ENCODE measurements at regions of chr7 and their contacts with region 1.

Region 1: DNA sequence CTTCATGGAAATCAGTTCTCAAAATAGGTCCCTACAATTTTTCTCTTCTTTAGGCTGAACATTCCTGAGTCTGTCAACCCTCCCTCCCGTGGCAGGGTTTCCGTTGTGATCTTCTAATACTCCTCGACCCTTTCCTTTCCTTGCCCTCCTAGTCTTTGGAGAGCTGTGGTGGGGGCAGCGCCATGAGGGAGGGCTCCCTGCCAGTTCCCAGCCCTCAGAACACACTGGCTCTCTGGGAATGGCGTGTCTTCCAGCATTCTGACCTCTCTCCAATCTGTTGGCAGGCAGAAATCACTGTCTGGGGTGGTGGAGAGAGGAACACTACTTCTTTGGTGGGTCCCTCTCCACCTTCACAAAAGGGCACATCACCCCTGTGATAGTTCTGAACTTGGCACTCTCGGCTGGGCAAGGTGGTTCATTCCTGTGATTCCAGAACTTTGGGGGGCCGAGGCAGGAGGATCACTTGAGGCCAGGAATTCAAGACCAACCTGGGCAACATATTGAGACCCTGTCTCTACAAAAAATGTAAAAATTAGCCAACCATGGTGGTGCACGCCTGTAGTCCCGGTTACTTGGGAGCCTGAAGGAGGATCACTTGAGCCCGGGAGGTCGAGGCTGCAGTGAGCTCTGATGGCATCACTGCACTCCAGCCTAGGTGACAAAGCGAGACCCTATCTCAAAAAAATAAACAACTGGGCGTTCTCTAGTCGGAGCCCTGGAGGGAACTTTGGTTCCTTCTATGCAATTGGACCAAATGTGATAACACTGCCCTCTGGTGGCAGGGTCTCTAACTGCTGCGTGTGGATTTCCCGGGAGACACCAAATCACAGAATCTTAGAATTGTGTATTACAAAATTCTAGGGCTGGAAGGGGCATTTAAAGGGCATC is 13.1 kb upstream of the ARPC1A start:
- DNase-seq: peak; percentile 77
- CTCF ChIP-seq: peak; percentile 73

Region 2: DNA sequence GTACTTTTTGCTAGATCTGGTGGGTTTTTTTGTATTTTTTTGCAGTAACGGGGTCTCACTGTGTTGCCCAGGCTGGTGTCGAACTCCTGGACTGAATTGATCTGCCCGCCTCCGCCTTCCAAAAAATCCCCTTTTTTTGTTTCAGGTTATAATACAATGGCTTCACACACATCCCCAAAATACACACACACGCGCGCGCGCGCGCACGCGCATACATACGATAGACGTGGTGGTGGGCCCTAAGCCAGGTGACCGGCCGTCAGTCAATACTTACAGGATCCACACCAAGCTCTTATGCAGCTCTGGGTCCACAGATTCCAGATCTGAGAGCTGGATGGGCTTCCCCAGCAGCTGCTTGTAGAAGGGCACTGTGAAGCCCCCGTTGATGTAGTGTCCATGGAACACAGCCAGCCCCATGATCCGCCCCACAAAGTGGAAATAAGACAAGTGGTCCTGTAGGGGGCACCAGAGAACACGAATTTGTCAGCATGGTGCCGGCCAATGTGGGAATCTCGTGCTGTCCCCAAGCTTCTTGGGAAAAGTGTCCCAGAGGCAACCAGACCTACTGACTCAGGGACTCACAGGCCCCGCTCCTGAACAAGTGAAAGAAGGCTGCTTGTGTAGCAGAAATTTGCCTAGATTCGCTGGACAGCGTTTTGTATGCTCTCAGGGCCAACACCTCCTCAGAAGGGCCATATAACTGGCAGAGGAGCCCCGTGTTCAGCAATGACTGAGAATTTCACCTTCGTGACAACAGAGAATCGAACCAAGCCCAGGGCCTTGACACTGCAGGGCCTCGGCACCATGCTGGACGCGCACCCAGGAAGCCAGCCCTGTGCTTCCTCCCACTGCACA is 272.2 kb before region 1 on chr7:
- in situ Hi-C with region 1: loop called (anchors 5 kb)
- DNase-seq: peak; percentile 89
- CTCF ChIP-seq: peak; percentile 62

Measured in GM13976 (cell line).